Activated T-helper 2 cell treated with anti-CD3 and anti-CD28 coated beads, Interferon-gamma antibody, Interleukin-2, Interleukin-4, amounts not matched to agents 10 μg/mL and 5 μg/mL and 100 μg/mL, durations not matched to agents 14 hours and 24 hours and 36 hours (primary cell): ENCODE measurements at regions of chr6 and their contacts with region 1.

Region 1: DNA sequence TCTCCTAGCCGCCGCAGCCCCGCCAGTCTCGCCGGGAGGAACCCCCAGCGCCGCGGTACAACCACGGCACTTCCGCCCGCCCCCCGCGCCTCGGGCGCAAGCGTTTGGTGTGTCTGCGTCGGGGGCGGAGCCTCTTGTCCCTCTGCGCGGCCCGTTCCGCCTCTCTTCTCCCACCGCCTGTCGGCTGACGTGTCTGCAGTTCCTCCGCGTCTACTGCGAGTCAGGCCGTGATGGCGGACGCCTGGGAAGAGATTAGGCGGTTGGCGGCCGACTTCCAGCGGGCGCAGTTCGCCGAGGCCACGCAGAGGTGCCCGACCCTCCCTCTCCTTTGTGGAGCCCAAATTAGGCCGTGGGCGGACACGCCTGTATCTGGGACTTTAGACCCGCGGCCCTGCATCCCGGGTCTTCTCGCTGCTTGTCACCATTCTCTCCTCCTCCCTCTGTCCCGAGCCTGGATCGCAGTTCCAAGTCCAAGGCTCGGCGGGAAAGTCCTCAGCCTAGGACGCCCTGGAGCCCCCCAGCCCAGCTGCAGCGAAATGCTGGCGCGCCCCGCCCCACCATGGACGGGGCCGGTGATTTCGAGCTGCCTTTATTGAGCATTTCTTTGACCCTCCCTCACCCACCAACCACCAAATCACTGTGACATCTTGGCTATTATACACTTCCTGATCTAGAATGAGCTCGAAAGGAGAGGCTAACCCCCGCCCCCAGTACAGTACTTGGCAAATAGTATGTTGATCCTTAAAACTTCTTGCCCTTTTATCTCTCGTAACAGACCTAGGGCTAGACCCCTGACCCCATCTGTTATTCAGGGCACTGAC is at the start of gene UFL1:
- DNase-seq: peak; percentile 90
- H3K4me3 Mint-ChIP-seq: peak within 1 kb of the TSS; percentile 99
- H3K27ac Mint-ChIP-seq: peak within 1 kb of the TSS; percentile 99
- H3K4me1 Mint-ChIP-seq: peaks cover 12% of the 10 kb centered on the region
- H3K27me3 Mint-ChIP-seq: no peaks in the 10 kb centered on the region
- total RNA-seq, gene UFL1: 27.0 and 27.3 TPM in 2 replicates

Region 2: DNA sequence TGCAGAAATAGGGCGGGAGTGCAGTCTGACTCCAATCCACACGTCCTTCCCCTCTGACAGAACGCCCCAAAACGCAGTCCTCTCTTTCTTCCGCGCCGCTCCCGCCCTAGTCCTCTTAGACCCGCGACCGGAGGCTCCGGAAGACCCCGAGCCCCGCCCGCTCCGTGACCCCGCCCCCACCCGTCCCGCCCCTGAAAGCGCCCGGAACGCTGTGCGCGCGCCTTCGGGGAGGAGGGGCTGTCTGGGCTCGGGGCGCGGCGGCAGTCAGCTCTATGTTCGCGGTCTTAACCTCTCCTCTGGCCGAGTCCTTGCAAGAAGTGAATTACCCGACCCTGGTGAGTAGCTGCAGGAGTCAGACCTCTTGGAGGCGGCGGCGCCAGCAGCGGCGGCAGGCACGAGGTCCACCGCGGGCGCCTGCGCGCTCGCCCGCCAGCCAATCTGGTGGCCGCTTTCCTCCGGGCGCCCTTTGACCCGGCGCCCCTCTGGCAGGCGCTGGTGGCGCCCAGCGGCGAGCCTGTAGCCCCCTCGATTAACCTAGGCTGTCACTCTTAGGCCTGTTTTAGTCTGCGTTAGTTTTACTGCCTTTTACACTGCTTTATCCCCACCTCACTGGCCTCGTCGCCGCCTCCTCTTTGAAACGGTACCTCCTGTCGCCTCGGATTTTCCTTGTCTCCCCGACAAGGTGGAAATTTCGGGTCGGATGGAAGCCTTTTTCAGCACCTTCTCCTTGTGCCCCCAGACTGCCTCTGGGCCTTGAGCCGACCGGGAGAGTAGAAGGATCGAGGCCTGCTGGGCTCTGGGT is 944.3 kb before region 1 on chr6 and contains the start of gene MANEA:
- intact Hi-C with region 1: loop called (anchors 2 kb)
- DNase-seq: peak; percentile 79
- H3K4me3 Mint-ChIP-seq: peak within 1 kb of the TSS; percentile 95
- H3K27ac Mint-ChIP-seq: peak within 1 kb of the TSS; percentile 99
- H3K4me1 Mint-ChIP-seq: peaks cover 45% of the 10 kb centered on the region
- H3K27me3 Mint-ChIP-seq: no peaks in the 10 kb centered on the region
- total RNA-seq, gene MANEA: 22.5 and 23.1 TPM in 2 replicates

Region 3: GRCh38 chr6:96089173-96089572 is 432.7 kb before region 1 on chr6:
- intact Hi-C with region 1: no loop called
- DNase-seq: no peak
- H3K4me3 Mint-ChIP-seq: no peak overlapping the region
- H3K27ac Mint-ChIP-seq: no peak overlapping the region
- H3K4me1 Mint-ChIP-seq: no peaks in the 10 kb centered on the region
- H3K27me3 Mint-ChIP-seq: no peaks in the 10 kb centered on the region

Region 4: DNA sequence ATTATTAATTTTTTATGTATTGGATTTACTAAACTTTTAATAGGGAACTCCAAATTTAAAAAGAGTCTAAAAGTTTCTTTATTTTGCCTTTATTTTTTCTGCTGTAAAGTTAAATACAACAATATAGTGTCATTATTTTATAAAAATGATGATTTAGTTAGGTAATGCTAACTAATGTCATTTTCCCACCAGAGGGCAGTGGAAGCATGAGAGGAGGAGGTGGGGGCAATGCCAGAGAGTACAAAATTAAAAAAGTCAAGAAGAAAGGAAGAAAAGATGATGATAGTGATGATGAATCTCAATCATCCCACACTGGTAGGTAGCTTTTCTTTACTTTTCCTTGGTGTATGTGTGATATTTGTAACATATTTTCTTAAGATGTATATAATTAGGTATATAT is 20.8 kb after region 1 on chr6:
- intact Hi-C with region 1: loop called (anchors 2 kb)
- DNase-seq: no peak
- H3K4me3 Mint-ChIP-seq: no peak overlapping the region
- H3K27ac Mint-ChIP-seq: no peak overlapping the region
- H3K4me1 Mint-ChIP-seq: peaks cover 1% of the 10 kb centered on the region
- H3K27me3 Mint-ChIP-seq: no peaks in the 10 kb centered on the region

Region 5: DNA sequence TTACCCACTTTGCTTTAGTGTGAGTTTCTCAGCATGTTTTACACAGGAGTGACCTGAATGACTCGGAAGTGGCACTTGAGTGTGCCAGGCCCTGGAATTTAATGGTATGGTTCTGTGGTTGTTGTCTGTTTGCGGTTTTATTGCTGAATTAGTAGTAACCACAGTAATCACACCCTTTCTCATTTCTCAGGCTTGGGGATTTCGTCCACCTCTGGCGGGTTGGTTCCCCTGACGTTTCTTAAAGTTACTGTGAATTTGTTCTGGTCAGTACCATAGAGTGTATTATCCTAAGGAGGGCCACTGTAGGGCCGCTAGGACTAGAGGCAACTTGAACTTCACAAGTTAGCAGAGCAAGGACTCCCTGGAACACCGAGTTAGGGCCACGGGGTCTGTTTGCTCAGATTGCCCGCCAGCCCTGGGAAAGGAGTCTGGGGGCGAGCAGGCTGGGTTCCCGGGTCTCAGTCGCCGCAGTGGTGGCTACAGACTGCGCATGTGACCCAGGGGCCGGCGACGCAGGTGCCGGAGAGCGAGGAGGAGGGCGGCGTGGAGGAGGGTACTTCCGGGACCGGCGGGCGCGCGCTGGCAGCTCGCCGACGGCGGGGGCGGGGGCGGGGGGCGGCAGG is 402.1 kb after region 1 on chr6:
- intact Hi-C with region 1: loop called (anchors 10 kb)
- DNase-seq: no peak
- H3K4me3 Mint-ChIP-seq: peak overlapping the region; percentile 89
- H3K27ac Mint-ChIP-seq: peak overlapping the region; percentile 89
- H3K4me1 Mint-ChIP-seq: peaks cover 35% of the 10 kb centered on the region
- H3K27me3 Mint-ChIP-seq: peaks cover 11% of the 10 kb centered on the region

Region 6: DNA sequence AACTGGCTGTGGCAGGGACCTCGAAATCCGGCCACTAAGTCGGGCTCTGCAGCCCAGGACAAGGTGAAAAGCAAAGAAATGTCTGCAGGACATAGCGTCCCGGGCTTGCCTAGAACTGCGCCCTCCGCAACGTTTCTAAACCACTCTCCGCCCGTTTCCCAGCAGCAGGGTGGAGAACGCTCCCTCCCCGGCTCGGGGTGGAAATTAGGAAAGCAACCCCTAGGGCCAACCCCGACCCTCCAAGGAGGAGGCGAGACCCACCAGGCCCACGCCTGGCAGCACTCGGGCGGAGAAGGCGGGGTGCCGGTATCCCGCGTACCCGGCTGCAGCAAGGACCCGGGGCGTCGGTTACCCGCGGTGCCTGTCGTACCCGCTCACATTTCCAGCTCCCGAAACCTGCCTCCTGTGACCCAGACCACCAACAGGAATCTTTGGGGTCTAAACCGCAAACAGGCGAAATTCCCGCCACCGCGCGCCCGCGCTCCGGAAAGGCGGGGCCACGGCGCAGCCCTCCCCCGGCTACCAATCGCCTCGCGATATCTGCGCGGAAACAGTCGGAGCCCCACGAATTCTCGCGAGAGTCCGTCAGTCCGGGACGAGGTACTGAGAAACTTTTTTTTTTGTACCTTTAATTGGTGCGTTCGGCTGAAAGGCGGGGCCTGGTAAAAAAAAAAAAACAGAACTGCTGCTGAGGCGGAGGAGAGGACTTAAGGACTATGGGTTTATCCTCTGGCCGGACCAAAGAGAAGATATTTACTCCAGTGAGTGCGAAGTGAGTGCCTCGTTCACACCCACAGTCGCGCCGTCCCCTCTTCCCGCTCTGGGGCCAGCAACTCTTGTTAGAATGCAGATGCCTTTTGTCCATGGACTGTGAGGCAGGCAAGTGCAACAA is 761.1 kb after region 1 on chr6 and contains the start of gene MMS22L:
- intact Hi-C with region 1: loop called (anchors 2 kb)
- DNase-seq: peak; percentile 92
- H3K4me3 Mint-ChIP-seq: peak within 1 kb of the TSS; percentile 89
- H3K27ac Mint-ChIP-seq: peak within 1 kb of the TSS; percentile 81
- H3K4me1 Mint-ChIP-seq: peaks cover 25% of the 10 kb centered on the region
- H3K27me3 Mint-ChIP-seq: peaks cover 12% of the 10 kb centered on the region
- total RNA-seq, gene MMS22L: 50.5 and 56.4 TPM in 2 replicates